Activated CD8-positive, alpha-beta T cell treated with anti-CD3 and anti-CD28 coated beads for 36 hours (primary cell): ENCODE measurements at regions of chr7 and their contacts with region 1.

Region 1: DNA sequence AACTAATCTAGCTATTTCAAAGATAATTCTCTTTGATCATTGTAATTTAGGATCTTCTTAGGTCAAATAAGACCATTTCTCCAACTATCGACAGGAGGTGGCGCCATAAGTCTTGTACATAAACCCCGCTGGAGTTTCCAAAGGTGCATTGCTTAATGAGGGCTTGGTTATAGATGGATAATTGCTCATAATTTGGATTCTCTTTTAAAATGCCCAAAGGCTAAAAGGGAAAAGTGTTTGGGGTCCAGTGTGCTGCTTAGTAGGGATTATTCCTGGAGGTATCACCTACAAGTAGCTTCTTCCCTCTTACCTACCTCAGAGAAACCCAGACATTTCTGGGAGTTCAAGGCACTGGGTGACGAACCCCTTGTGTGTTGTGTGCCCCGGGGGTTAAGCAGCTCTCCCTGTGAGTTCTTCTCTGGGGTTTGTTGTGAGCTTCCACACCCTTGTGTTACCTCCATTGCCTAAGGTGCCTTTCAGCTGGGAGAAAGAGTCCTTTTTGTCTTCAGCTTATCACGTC is 75.2 kb downstream of the PAXIP1 start:
- DNase-seq: peak; percentile 94
- ATAC-seq: peak; percentile 67
- H3K4me3 Mint-ChIP-seq: peak overlapping the region; percentile 83
- H3K27ac Mint-ChIP-seq: peak overlapping the region; percentile 99
- H3K4me1 Mint-ChIP-seq: peaks cover 20% of the 10 kb centered on the region
- H3K27me3 Mint-ChIP-seq: no peaks in the 10 kb centered on the region
- CTCF ChIP-seq: peak; percentile 87

Region 2: DNA sequence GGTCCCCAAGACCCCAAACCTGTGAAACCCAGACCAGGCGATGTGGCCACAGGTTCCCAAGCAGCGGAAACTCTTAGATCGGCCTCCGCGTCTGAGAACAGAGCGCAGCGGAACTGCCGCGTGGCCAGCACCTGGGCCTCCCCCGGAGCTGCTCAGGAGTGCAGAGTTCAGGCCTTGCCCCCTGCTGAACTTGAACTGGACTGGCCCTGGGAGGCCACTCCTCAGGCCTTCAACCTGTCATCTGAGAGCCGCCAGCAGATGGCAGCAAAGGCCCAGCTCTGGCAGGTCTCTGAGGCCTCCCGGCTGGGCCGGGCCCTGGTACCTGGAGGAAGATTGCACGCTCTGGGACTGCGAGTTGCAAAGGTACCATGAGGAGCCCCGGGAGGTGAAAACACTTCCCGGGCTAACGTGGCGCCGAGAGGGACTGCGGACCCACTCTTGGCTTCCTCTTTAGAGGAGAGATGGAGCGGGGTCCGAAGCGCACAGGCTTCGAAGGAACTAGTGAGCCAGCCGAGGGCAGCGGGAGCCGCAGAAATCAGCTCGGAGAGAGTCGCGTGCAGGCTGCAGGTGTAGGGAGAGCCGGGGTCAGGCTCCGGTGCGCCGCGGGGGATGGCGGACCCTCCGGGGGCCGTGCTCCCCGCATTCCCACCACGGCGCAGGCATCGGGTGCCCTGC is 13.9 kb before region 1 on chr7:
- CTCF ChIA-PET with region 1: interaction called, 77 read pairs
- POLR2A ChIA-PET with region 1: interaction called, 7 read pairs
- intact Hi-C with region 1: no loop called
- DNase-seq: peak; percentile 92
- ATAC-seq: peak; percentile 94
- H3K4me3 Mint-ChIP-seq: peak overlapping the region; percentile 63
- H3K27ac Mint-ChIP-seq: no peak overlapping the region
- H3K4me1 Mint-ChIP-seq: peaks cover 5% of the 10 kb centered on the region
- H3K27me3 Mint-ChIP-seq: peaks cover 14% of the 10 kb centered on the region
- CTCF ChIP-seq: peak; percentile 91

Region 3: GRCh38 chr7:154960063-154960790 is 32.5 kb after region 1 on chr7:
- CTCF ChIA-PET with region 1: interaction called, 11 read pairs
- POLR2A ChIA-PET with region 1: interaction called, 3 read pairs
- intact Hi-C with region 1: no loop called
- DNase-seq: no peak
- ATAC-seq: no peak
- H3K4me3 Mint-ChIP-seq: no peak overlapping the region
- H3K27ac Mint-ChIP-seq: no peak overlapping the region
- H3K4me1 Mint-ChIP-seq: no peaks in the 10 kb centered on the region
- H3K27me3 Mint-ChIP-seq: no peaks in the 10 kb centered on the region
- CTCF ChIP-seq: no peak

Region 4: GRCh38 chr7:155009570-155010157 is 82.0 kb after region 1 on chr7:
- CTCF ChIA-PET with region 1: interaction called, 21 read pairs
- POLR2A ChIA-PET with region 1: interaction called, 3 read pairs
- intact Hi-C with region 1: loop called (anchors 5 kb)
- DNase-seq: peak; percentile 71
- ATAC-seq: peak; percentile 58
- H3K4me3 Mint-ChIP-seq: no peak overlapping the region
- H3K27ac Mint-ChIP-seq: no peak overlapping the region
- H3K4me1 Mint-ChIP-seq: peaks cover 3% of the 10 kb centered on the region
- H3K27me3 Mint-ChIP-seq: no peaks in the 10 kb centered on the region
- CTCF ChIP-seq: peak; percentile 66

Region 5: DNA sequence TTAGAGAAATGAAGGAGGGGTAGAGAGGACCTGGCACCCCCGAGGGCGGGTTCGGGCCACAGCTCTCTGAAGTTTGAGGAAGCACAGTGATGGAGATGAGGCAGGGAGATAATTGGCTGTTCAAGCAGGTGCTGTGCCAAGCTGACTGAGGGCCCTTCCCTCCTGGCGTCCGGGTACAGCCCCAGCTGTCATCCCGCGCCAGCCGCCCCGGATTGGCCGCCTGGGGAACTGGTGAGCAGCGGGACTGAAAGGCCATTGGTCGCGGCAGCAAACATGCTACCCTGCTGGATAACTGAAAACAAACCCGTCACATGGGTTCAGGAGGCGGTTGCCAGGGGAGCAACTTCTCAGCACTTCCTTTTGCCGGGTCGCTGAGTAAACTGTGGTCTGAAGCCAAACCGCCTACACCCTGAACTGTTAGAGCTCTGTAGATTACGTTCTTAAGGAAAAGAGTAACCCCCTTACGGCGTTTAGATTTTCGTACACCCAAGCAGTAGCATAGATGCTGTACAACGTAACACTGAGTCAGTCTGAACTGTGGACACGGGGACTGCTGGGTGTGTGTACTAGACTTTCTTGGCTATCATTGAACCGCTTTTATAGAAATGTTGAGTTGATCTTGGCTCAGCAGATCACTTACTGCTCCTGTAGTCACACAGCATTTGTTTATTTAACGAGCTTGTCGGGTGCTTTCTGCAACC is 371.3 kb after region 1 on chr7:
- CTCF ChIA-PET with region 1: interaction called, 18 read pairs
- POLR2A ChIA-PET with region 1: interaction called, 9 read pairs
- intact Hi-C with region 1: loop called (anchors 5 kb)
- DNase-seq: peak; percentile 98
- ATAC-seq: peak; percentile 80
- H3K4me3 Mint-ChIP-seq: peak overlapping the region; percentile 96
- H3K27ac Mint-ChIP-seq: peak overlapping the region; percentile 93
- H3K4me1 Mint-ChIP-seq: peaks cover 43% of the 10 kb centered on the region
- H3K27me3 Mint-ChIP-seq: no peaks in the 10 kb centered on the region
- CTCF ChIP-seq: no peak

Region 6: GRCh38 chr7:155363852-155364562 is 436.3 kb after region 1 on chr7:
- CTCF ChIA-PET with region 1: interaction called, 4 read pairs
- POLR2A ChIA-PET with region 1: no interaction called
- intact Hi-C with region 1: loop called (anchors 5 kb)
- DNase-seq: peak; percentile 26
- ATAC-seq: peak; percentile 49
- H3K4me3 Mint-ChIP-seq: no peak overlapping the region
- H3K27ac Mint-ChIP-seq: no peak overlapping the region
- H3K4me1 Mint-ChIP-seq: peaks cover 4% of the 10 kb centered on the region
- H3K27me3 Mint-ChIP-seq: peaks cover 32% of the 10 kb centered on the region
- CTCF ChIP-seq: no peak